Activated T-helper 2 cell treated with anti-CD3 and anti-CD28 coated beads, Interferon-gamma antibody, Interleukin-2, Interleukin-4, amounts not matched to agents 10 μg/mL and 5 μg/mL and 100 μg/mL, durations not matched to agents 14 hours and 24 hours and 36 hours (primary cell): ENCODE measurements at regions of chr17 and their contacts with region 1.

Region 1: GRCh38 chr17:7136266-7136877 is 21.8 kb upstream of the ASGR2 start:
- DNase-seq: peak; percentile 52
- H3K4me3 Mint-ChIP-seq: no peak overlapping the region
- H3K27ac Mint-ChIP-seq: no peak overlapping the region
- H3K4me1 Mint-ChIP-seq: peaks cover 15% of the 10 kb centered on the region
- H3K27me3 Mint-ChIP-seq: peaks cover 20% of the 10 kb centered on the region

Region 2: DNA sequence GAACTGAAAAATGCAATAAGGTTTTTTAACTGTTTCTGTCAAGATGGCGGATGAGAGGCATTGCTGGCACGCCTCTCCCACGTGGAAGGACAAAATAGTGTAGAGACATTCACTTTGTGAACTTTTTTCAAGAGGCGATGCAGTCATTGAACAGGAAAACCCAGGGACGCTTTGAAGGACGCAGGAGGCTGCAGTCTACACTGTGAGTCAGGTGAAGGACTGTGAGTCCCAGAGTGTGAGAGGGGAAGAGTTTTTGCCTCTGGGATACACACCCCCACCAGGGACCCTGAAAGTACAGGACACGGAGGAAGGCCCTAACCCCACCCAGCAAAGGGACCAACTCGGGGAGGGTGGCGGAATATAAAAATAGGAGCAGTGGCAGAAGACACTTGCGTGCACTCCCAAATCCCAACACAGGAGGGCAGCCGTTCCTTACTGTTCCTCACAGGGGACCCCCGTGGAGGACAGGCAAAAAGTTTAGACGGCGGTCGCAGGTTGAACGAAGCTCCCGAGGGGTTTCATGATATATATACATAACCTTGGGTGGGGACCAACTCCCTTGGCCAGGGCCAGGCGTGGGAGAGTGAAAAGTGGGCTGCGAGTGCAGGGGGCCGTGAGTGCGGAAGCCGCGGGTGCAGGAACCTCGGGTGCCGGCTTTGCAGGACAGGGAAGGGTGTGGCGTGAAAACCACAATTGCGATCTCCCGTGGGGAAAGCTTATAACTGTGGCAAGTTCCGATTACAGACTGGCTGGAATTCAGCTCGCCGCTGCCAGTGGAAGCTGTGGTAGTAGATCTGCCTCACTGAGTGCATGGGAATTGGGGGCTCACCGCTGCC is 222.5 kb before region 1 on chr17:
- intact Hi-C with region 1: loop called (anchors 5 kb)
- DNase-seq: peak; percentile 55
- H3K4me3 Mint-ChIP-seq: peak overlapping the region; percentile 65
- H3K27ac Mint-ChIP-seq: no peak overlapping the region
- H3K4me1 Mint-ChIP-seq: peaks cover 30% of the 10 kb centered on the region
- H3K27me3 Mint-ChIP-seq: peaks cover 27% of the 10 kb centered on the region

Region 3: DNA sequence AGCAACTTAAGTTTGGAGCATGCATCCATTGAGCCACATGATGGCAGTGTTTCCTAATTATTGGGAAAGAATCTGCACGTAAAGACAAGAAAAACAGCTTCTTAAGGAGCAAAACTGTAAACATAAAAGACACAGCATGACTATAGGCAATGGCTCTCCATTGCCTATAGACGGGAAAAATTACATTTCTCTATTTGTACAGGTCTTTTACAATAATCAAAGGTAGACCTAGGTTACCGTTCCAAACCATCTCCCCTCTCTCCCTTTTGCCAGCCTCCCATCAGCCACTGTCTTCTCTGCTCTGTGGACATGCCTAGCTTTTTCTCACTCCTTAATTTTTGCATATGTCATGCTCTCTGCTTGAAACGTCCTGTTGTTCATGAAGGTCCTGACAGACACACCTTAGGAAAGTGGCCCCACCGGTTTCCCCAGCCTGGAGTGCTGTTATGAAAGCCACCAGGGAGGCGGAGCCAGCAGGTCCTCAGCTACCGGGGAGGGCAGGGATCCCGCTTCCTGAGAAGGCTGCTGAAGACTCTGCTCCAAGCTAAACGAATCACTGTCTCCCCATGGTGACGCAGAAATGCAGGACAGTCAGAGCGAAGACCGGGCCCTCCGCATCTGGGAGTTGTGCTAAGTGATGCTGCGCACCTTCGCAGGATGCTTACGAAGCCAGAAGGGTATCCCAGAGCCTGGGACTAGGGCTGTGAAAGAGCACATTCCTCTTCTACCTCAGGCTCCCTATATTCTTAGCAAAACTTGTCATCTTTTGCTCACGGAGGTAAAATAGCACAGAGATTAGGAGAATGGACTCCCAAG is 90.3 kb before region 1 on chr17:
- intact Hi-C with region 1: loop called (anchors 1 kb)
- DNase-seq: no peak
- H3K4me3 Mint-ChIP-seq: peak overlapping the region; percentile 75
- H3K27ac Mint-ChIP-seq: peak overlapping the region; percentile 68
- H3K4me1 Mint-ChIP-seq: peaks cover 21% of the 10 kb centered on the region
- H3K27me3 Mint-ChIP-seq: peaks cover 12% of the 10 kb centered on the region

Region 4: DNA sequence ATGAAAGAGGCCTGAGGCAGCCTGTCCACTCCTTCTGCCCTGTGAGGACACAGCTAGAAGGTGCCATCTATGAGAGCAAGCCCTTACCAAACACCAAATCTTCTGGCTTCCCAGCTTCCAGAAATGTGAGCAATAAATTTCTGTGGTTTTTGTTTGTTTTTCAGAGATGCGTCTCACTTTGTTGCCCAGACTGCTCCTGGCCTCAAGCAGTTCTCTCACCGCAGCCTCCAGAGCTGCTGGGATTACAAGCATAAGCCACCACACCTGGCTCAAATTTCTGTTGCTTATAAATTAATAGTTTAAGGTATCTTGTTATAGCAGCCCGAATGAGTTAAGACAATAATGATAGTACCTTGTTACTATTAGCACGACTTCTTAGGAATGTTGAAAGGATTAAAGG is 80.0 kb before region 1 on chr17:
- intact Hi-C with region 1: loop called (anchors 1 kb)
- DNase-seq: no peak
- H3K4me3 Mint-ChIP-seq: no peak overlapping the region
- H3K27ac Mint-ChIP-seq: no peak overlapping the region
- H3K4me1 Mint-ChIP-seq: peaks cover 13% of the 10 kb centered on the region
- H3K27me3 Mint-ChIP-seq: no peaks in the 10 kb centered on the region